Dendritic cell treated with granulocyte-macrophage colony-stimulating factor and Interleukin-4, amounts not matched to agents 40 ng/mL and 50 ng/mL, for 4 days (primary cell): ENCODE measurements at regions of chr17 and their contacts with region 1.

Region 1: GRCh38 chr17:77429919-77430752 is 289.4 kb downstream of the SEC14L1 start:
- H3K4me3 Mint-ChIP-seq: peak overlapping the region; percentile 20
- H3K27ac Mint-ChIP-seq: peak overlapping the region; percentile 86
- H3K4me1 Mint-ChIP-seq: peaks cover 84% of the 10 kb centered on the region
- H3K27me3 Mint-ChIP-seq: peaks cover 2% of the 10 kb centered on the region

Region 2: DNA sequence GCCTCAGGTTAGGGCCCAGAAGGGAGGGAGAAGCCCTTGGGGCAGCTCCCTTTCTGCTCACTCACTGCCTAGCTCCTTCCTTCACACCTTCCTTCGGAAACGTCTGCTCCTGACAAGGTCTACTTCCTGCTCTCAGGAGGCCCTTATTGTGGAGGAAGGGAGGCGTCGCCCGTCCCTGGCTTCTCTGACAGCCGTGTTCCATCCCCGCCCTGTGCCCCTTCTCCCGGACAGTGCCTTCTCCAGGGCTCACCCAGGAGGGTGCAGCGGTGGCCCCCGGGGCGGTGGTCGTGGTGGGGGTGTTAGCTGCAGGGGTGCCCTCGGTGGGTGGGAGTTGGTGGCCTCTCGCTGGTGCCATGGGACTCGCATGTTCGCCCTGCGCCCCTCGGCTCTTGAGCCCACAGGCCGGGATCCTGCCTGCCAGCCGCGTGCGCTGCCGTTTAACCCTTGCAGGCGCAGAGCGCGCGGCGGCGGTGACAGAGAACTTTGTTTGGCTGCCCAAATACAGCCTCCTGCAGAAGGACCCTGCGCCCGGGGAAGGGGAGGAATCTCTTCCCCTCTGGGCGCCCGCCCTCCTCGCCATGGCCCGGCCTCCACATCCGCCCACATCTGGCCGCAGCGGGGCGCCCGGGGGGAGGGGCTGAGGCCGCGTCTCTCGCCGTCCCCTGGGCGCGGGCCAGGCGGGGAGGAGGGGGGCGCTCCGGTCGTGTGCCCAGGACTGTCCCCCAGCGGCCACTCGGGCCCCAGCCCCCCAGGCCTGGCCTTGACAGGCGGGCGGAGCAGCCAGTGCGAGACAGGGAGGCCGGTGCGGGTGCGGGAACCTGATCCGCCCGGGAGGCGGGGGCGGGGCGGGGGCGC is 57.5 kb before region 1 on chr17:
- intact Hi-C with region 1: loop called (anchors 10 kb)
- H3K4me3 Mint-ChIP-seq: peak overlapping the region; percentile 70
- H3K27ac Mint-ChIP-seq: peak overlapping the region; percentile 58
- H3K4me1 Mint-ChIP-seq: peaks cover 83% of the 10 kb centered on the region
- H3K27me3 Mint-ChIP-seq: no peaks in the 10 kb centered on the region

Region 3: GRCh38 chr17:77494664-77495435 is 64.7 kb after region 1 on chr17:
- intact Hi-C with region 1: loop called (anchors 1 kb)
- H3K4me3 Mint-ChIP-seq: no peak overlapping the region
- H3K27ac Mint-ChIP-seq: no peak overlapping the region
- H3K4me1 Mint-ChIP-seq: peaks cover 35% of the 10 kb centered on the region
- H3K27me3 Mint-ChIP-seq: no peaks in the 10 kb centered on the region